CD4-positive, alpha-beta memory T cell (primary cell): ENCODE measurements at regions of chr10 and their contacts with region 1.

Region 1: DNA sequence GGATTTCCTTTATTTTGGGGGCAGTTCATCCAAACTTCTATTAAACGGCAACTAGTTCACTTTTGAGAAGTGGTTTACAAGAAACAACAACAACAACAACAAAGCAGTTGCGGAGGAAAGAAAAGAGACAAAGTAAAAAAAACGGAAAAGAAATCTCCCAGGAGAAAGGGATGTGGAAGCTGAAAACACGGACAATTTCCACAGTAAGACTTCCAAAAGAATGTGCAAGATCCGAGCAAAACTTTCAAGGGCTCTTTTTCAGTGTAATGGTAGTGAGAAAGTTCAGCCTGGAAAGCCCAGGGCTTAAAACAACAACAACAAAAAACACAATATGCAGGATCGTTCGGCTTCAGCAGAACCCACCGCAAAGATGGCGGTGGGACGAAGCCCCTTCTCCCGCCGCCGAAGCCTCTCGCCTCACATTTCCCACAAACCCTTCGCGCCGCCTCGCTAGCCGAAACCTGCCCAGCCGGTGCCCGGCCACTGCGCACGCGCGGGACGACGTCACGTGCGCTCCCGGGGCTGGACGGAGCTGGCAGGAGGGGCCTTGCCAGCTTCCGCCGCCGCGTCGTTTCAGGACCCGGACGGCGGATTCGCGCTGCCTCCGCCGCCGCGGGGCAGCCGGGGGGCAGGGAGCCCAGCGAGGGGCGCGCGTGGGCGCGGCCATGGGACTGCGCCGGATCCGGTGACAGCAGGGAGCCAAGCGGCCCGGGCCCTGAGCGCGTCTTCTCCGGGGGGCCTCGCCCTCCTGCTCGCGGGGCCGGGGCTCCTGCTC is at the start of gene TNKS2:
- DNase-seq: peak; percentile 88 to 93 (median 92)
- H3K4me3 ChIP-seq: peak within 1 kb of the TSS; percentile 83
- H3K4me3 Mint-ChIP-seq: peak within 1 kb of the TSS; percentile 91 to 99 (median 99)
- H3K27ac ChIP-seq: peak within 1 kb of the TSS; percentile 90
- H3K27ac Mint-ChIP-seq: peak within 1 kb of the TSS; percentile 92 to 100 (median 98)
- H3K4me1 ChIP-seq: peaks cover 53% of the 10 kb centered on the region
- H3K4me1 Mint-ChIP-seq: peaks cover 50 to 72% (median 62%) of the 10 kb centered on the region in 4 donors
- H3K27me3 ChIP-seq: no peaks in the 10 kb centered on the region
- H3K27me3 Mint-ChIP-seq: no peaks in the 10 kb centered on the region
- total RNA-seq, gene TNKS2: 65.5 to 70.0 TPM

Region 2: GRCh38 chr10:90969947-90970684 is 827.9 kb before region 1 on chr10:
- CTCF ChIA-PET with region 1: no interaction called
- POLR2A ChIA-PET with region 1: no interaction called
- intact Hi-C with region 1: no loop called
- DNase-seq: no peak
- H3K4me3 ChIP-seq: no peak overlapping the region
- H3K4me3 Mint-ChIP-seq: no peak overlapping the region
- H3K27ac ChIP-seq: no peak overlapping the region
- H3K27ac Mint-ChIP-seq: no peak overlapping the region
- H3K4me1 ChIP-seq: no peaks in the 10 kb centered on the region
- H3K4me1 Mint-ChIP-seq: no peaks in the 10 kb centered on the region
- H3K27me3 ChIP-seq: no peaks in the 10 kb centered on the region
- H3K27me3 Mint-ChIP-seq: peaks cover 4 to 9% of the 10 kb centered on the region in 2 donors

Region 3: GRCh38 chr10:91409869-91410637 is 388.0 kb before region 1 on chr10 and contains the start of gene HECTD2:
- CTCF ChIA-PET with region 1: interaction called, 4 read pairs
- POLR2A ChIA-PET with region 1: interaction called, 9 read pairs
- intact Hi-C with region 1: loop called (anchors 5 kb)
- DNase-seq: peak; percentile 78 to 90 (median 88)
- H3K4me3 ChIP-seq: peak within 1 kb of the TSS; percentile 88 to 92
- H3K4me3 Mint-ChIP-seq: peak within 1 kb of the TSS; percentile 88 to 97 (median 91)
- H3K27ac ChIP-seq: peak within 1 kb of the TSS; percentile 74
- H3K27ac Mint-ChIP-seq: peak within 1 kb of the TSS; percentile 78 to 97 (median 95)
- H3K4me1 ChIP-seq: peaks cover 20% of the 10 kb centered on the region
- H3K4me1 Mint-ChIP-seq: peaks cover 7 to 15% (median 11%) of the 10 kb centered on the region in 4 donors
- H3K27me3 ChIP-seq: no peaks in the 10 kb centered on the region
- H3K27me3 Mint-ChIP-seq: peaks cover 0 to under 1% of the 10 kb centered on the region in 2 donors
- total RNA-seq, gene HECTD2: 2.6 to 2.7 TPM

Region 4: DNA sequence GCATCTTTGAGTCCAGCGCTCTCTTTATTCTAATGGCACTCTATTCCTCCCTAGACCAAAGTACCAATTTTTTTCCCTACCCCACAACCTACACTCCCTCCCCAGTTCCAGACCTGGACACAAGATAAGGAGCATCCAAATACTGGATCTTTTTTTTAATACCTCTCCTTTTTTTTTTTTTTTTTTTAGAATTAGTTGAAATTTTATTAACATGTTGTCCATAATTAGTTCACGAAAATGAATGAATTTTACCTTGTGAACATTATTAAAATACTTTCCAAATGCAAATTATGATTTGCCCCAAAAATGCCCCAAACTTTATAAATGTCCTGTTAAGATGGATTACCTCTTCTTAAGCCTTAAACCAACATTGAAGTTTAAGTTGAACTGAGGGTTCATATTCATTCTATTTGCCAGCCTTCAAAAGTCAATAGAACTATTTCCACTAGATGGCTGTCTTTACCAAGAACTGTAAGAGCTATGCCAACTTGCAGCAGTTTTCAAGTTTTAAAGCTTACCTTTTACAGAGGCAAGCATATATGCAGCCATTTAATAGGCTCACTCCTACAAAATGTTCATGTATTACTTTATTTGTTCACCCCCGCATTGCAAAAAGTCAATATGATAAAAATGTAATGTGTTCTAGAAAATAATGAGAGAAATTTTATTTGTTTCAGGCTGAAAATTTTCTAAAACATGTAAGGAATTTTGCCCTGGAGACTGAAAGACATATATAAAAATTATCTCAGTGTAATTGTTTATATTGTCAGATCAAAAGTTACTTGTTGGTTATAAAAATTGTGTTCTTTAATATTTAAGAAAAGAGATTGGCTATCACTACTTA is 39.5 kb before region 1 on chr10:
- CTCF ChIA-PET with region 1: interaction called, 8 read pairs
- POLR2A ChIA-PET with region 1: interaction called, 3 read pairs
- intact Hi-C with region 1: loop called (anchors 2 kb)
- DNase-seq: peak in 4 of 5 donors; percentile 49 to 62 (median 55)
- H3K4me3 ChIP-seq: no peak overlapping the region
- H3K4me3 Mint-ChIP-seq: no peak overlapping the region
- H3K27ac ChIP-seq: no peak overlapping the region
- H3K27ac Mint-ChIP-seq: no peak overlapping the region
- H3K4me1 ChIP-seq: no peaks in the 10 kb centered on the region
- H3K4me1 Mint-ChIP-seq: peaks cover 0 to 2% (median 0%) of the 10 kb centered on the region in 4 donors
- H3K27me3 ChIP-seq: no peaks in the 10 kb centered on the region
- H3K27me3 Mint-ChIP-seq: peaks cover 11% of the 10 kb centered on the region in 2 donors

Region 5: GRCh38 chr10:91923371-91924211 is 125.5 kb after region 1 on chr10 and contains the start of gene BTAF1:
- CTCF ChIA-PET with region 1: interaction called, 5 read pairs
- POLR2A ChIA-PET with region 1: interaction called, 40 read pairs
- intact Hi-C with region 1: loop called (anchors 1 kb)
- DNase-seq: peak; percentile 89 to 93 (median 92)
- H3K4me3 ChIP-seq: peak within 1 kb of the TSS; percentile 79 to 87
- H3K4me3 Mint-ChIP-seq: peak within 1 kb of the TSS; percentile 90 to 99 (median 94)
- H3K27ac ChIP-seq: peak within 1 kb of the TSS; percentile 91
- H3K27ac Mint-ChIP-seq: peak within 1 kb of the TSS; percentile 96 to 100 (median 99)
- H3K4me1 ChIP-seq: peaks cover 50% of the 10 kb centered on the region
- H3K4me1 Mint-ChIP-seq: peaks cover 29 to 50% (median 38%) of the 10 kb centered on the region in 4 donors
- H3K27me3 ChIP-seq: no peaks in the 10 kb centered on the region
- H3K27me3 Mint-ChIP-seq: peaks cover 2% of the 10 kb centered on the region in 2 donors
- total RNA-seq, gene BTAF1: 69.1 to 76.9 TPM